ENCODE measurements at regions of chr11 and their contacts with region 1.

Region 1: GRCh38 chr11:66677599-66678375 is at the start of gene RBM4B:
- DNase-seq: peak; percentile 81
- H3K4me3 ChIP-seq: peak within 1 kb of the TSS; percentile 67 to 83 (median 72)
- H3K27ac ChIP-seq: peak within 1 kb of the TSS; percentile 93 to 98 (median 94)
- H3K4me1 ChIP-seq: peaks cover 5 to 57% (median 32%) of the 10 kb centered on the region in 3 donors
- H3K27me3 ChIP-seq: no peaks in the 10 kb centered on the region
- CTCF ChIP-seq: peak in 1 of 6 experiments; percentile 13
- POLR2A ChIP-seq: peak in 3 of 4 donors; percentile 7 to 77 (median 59)
- total RNA-seq, gene RBM4B: 8.4 to 16.4 (median 9.2) TPM

Region 2: GRCh38 chr11:66580803-66581202 is 97.0 kb before region 1 on chr11:
- intact Hi-C with region 1: loop called (anchors 5 kb)
- DNase-seq: no peak
- H3K4me3 ChIP-seq: no peak overlapping the region
- H3K27ac ChIP-seq: no peak overlapping the region
- H3K4me1 ChIP-seq: peaks cover 0 to 7% (median 0%) of the 10 kb centered on the region in 3 donors
- H3K27me3 ChIP-seq: no peaks in the 10 kb centered on the region
- CTCF ChIP-seq: no peak
- POLR2A ChIP-seq: no peak

Region 3: DNA sequence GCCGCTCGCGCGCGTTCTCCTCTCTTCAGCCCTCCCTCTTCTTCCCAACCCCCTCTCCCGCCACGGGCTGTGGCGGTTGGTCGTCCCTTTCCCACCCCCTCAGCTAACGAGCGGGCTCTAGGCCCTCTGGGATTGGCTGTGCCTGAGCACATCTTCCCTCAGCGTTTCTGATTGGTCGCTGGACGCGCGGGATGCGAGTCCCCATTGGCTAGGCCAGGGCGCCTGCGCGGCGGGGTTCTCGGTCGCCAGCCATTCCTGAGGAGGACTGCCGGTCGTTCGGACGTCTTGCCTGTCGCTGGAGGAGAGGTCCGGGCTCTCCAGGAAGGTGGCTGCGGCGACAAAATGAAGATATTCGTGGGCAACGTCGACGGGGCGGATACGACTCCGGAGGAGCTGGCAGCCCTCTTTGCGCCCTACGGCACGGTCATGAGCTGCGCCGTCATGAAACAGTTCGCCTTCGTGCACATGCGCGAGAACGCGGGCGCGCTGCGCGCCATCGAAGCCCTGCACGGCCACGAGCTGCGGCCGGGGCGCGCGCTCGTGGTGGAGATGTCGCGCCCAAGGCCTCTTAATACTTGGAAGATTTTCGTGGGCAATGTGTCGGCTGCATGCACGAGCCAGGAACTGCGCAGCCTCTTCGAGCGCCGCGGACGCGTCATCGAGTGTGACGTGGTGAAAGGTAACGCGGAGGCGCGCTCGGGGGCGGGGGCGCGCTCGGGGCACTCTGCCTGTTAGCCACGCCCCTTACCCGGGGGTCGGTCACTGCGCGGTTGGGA is 61.2 kb before region 1 on chr11 and contains the start of gene RBM14:
- intact Hi-C with region 1: loop called (anchors 5 kb)
- DNase-seq: peak; percentile 89
- H3K4me3 ChIP-seq: peak within 1 kb of the TSS; percentile 83 to 97 (median 90)
- H3K27ac ChIP-seq: peak within 1 kb of the TSS; percentile 97
- H3K4me1 ChIP-seq: peaks cover 22 to 57% (median 25%) of the 10 kb centered on the region in 3 donors
- H3K27me3 ChIP-seq: no peaks in the 10 kb centered on the region
- CTCF ChIP-seq: peak in 1 of 6 experiments; percentile 12
- POLR2A ChIP-seq: peak; percentile 40 to 100 (median 98)
- total RNA-seq, gene RBM14: 37.0 to 61.5 (median 38.0) TPM